Prostate gland (tissue), 2 donors: ENCODE measurements at regions of chr16 and their contacts with region 1.

Region 1: DNA sequence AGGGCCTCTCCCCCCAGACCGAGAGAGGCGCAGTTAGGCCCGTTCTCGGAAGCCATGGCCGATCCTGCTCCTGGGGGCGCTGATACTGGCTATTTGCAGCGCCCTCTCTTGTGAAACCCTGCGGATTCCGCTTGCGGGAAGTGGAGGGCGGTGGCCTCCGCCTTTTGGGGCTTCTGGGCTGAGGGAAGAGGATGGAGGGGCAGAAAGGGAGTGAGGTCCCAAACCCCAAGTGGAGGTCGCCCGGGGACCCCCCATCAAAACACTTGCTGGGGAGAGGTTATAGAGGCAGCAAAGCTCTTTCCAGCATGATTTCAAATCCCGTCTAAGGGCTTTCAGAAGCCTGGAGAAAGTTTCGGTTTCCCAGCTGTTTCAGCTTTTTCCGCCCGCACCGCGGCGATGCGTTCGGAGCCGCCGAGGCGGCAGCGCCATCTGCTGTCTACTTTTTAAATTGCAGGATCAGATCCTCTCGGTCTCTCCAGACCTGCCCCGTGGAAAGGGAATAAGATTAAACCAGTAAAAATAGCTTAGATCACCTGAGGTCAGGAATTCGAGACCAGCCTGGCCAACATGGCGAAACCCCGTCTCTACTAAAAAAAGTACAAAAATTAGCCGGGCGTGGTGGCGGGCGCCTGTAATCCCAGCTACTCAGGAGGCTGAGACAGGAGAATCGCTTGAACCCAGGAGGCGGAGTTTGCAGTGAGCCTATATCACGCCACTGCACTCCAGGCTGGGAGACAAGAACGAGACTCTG is 15.8 kb downstream of the SNX20 start:
- DNase-seq: peak; percentile 66
- H3K4me3 ChIP-seq: peak overlapping the region; percentile 21
- H3K27ac ChIP-seq: no peak overlapping the region
- H3K4me1 ChIP-seq: no peaks in the 10 kb centered on the region
- H3K27me3 ChIP-seq: no peaks in the 10 kb centered on the region
- CTCF ChIP-seq: peak; percentile 87 to 93 (median 88)
- POLR2A ChIP-seq: no peak

Region 2: GRCh38 chr16:50210266-50211038 is 454.9 kb before region 1 on chr16:
- intact Hi-C with region 1: loop called (anchors 10 kb)
- DNase-seq: peak; percentile 85
- H3K4me3 ChIP-seq: no peak overlapping the region
- H3K27ac ChIP-seq: no peak overlapping the region
- H3K4me1 ChIP-seq: peaks cover 3% of the 10 kb centered on the region
- H3K27me3 ChIP-seq: no peaks in the 10 kb centered on the region
- CTCF ChIP-seq: peak; percentile 20 to 76 (median 60)
- POLR2A ChIP-seq: no peak

Region 3: DNA sequence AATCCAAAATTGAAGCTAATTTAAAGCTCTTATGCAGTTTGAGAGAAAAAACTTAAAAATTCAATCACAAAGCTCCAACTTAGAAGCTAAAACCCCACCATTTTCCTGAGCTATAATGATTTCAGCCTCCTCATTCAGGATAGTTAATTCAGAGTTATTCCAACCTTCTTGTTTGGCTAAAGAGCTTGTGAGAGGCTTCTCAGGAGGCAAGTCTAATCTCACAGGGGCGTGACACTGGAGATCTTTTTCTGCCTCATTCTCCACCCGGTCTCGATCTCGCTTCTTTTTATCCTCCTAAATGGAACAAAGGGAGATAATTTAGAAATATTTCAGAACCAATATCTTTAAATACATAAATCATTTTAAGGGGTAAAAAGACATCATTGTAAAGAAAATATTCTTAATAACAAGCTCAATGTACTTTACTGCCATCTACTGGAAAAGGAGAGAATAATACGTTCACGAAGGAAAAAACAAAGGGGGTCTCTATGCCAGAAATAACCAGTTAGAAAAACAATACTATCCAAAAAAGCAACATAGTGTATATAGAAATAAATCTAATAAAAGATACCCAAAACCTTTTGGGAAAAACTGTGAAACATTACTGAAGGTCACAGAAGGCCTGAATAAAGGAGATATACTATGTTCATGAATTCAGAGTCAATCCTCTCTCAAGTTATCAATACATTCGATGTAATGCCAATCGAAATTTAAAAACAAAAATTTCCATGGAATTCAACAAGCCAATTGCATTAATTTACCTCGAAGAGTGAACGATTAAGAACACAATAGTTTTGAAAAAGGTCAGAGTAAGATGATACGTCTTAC is 310.5 kb before region 1 on chr16:
- intact Hi-C with region 1: no loop called
- DNase-seq: no peak
- H3K4me3 ChIP-seq: no peak overlapping the region
- H3K27ac ChIP-seq: no peak overlapping the region
- H3K4me1 ChIP-seq: peaks cover 4% of the 10 kb centered on the region
- H3K27me3 ChIP-seq: no peaks in the 10 kb centered on the region
- CTCF ChIP-seq: peak; percentile 29 to 54 (median 40)
- POLR2A ChIP-seq: no peak

Region 4: DNA sequence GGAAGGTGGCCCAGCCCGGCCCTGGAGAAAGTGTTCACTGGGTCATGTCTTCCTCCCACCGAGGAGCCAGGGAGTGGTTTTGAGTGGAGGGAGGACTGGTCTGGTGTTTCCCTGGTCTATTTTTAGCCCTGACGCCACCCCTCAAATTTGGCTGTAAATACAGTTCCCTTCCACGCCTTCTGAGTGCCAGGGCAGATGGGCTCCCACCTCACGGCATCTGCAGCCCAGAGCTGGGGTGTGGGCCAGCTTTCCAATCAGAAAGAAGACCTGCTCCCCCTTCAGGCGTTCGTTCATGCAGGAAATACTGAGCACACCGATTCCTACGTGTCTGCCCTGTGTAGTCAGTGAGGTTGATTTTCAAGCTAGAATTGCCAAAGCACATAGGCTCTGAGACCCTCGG is 37.9 kb before region 1 on chr16:
- intact Hi-C with region 1: no loop called
- DNase-seq: peak; percentile 38
- H3K4me3 ChIP-seq: no peak overlapping the region
- H3K27ac ChIP-seq: no peak overlapping the region
- H3K4me1 ChIP-seq: no peaks in the 10 kb centered on the region
- H3K27me3 ChIP-seq: no peaks in the 10 kb centered on the region
- CTCF ChIP-seq: peak in 2 of 4 experiments; percentile 51 to 61
- POLR2A ChIP-seq: no peak

Region 5: GRCh38 chr16:50747207-50747956 is 82.1 kb after region 1 on chr16:
- intact Hi-C with region 1: loop called (anchors 5 kb)
- DNase-seq: no peak
- H3K4me3 ChIP-seq: no peak overlapping the region
- H3K27ac ChIP-seq: no peak overlapping the region
- H3K4me1 ChIP-seq: no peaks in the 10 kb centered on the region
- H3K27me3 ChIP-seq: no peaks in the 10 kb centered on the region
- CTCF ChIP-seq: peak in 2 of 4 experiments; percentile 47 to 52
- POLR2A ChIP-seq: no peak

Region 6: DNA sequence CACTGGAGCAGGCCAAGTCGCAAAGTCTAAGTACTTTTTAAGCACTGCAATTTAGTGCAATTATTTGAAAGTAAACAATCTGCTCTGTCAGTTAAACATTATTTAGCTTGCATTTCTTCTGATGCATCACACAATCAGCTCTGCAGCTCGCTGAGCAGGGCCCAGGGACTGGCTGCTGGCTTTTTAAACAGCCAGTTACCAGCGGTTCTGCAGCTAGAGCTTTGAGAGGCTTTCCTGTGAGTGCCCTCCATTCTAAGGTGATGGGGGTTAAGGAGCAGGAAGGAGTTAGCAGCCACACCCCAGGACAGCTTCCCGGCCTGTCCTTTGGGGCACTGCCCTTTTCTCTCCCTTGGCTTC is 331.5 kb after region 1 on chr16:
- intact Hi-C with region 1: no loop called
- DNase-seq: no peak
- H3K4me3 ChIP-seq: no peak overlapping the region
- H3K27ac ChIP-seq: no peak overlapping the region
- H3K4me1 ChIP-seq: no peaks in the 10 kb centered on the region
- H3K27me3 ChIP-seq: no peaks in the 10 kb centered on the region
- CTCF ChIP-seq: no peak
- POLR2A ChIP-seq: no peak

Region 7: DNA sequence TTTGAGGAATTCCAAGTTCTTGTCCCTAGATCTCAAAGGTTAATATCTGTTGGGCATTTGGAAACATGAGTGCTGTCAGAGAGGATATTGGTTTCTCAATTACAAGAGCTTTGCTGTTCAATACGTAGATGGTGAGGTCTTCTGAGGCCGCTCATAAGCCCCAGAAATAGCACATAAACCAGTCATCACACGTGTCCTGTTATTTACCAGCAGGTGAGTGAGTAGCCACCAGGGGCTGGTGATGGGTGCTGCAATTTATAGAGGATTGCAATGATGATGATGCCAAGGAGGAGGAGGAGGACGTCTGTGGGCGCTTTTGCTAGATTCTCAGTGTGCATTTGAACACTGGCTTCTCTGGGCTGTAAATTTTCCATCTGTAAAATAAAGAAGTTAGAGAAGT is 396.7 kb after region 1 on chr16:
- intact Hi-C with region 1: no loop called
- DNase-seq: no peak
- H3K4me3 ChIP-seq: no peak overlapping the region
- H3K27ac ChIP-seq: no peak overlapping the region
- H3K4me1 ChIP-seq: no peaks in the 10 kb centered on the region
- H3K27me3 ChIP-seq: no peaks in the 10 kb centered on the region
- CTCF ChIP-seq: no peak
- POLR2A ChIP-seq: no peak